ENCODE measurements at regions of chr12 and their contacts with region 1.

Region 1: DNA sequence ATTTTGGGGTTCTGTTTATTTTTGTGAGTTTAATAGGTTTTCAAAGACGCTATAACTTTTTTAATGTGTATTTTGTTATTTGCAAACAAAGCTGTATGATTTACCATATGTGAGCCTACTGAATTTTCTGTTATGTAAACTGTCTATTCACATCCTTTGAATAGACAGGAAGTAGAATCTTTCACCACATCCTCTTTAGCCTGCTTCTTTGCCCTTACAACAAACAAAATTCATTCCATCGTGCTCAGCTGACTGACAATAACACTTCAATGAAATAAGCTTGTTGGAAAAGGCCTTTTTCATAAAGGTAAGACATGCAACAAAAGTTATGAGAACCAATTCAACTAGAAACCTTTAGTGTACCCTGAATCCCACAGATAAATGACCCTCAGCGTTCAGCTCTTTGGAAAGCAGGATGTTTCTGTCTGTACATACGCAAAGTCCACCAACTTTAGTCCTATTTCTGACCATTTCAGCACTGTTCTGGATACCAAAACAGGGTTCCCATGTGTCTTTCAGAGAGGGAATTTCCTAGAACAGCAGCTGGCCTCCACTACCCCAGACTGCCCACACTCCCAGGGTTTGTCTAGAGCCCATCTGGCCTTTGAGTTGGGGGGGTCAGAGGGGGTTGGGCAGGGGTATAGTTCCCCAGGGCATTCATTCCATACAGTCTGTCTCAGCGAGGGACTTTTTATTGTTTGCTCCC is 71.3 kb downstream of the DUSP6 start:
- DNase-seq: peak in 4 of 14 experiments; percentile 1 to 76 (median 46)
- ATAC-seq: peak; percentile 96
- H3K4me3 ChIP-seq: no peak overlapping the region
- H3K4me3 Mint-ChIP-seq: peak overlapping the region; percentile 50
- H3K27ac ChIP-seq: no peak overlapping the region
- H3K27ac Mint-ChIP-seq: peak overlapping the region; percentile 84
- H3K4me1 ChIP-seq: peaks cover 10% of the 10 kb centered on the region
- H3K4me1 Mint-ChIP-seq: peaks cover 48% of the 10 kb centered on the region
- H3K27me3 ChIP-seq: no peaks in the 10 kb centered on the region
- H3K27me3 Mint-ChIP-seq: no peaks in the 10 kb centered on the region
- CTCF ChIP-seq: no peak

Region 2: DNA sequence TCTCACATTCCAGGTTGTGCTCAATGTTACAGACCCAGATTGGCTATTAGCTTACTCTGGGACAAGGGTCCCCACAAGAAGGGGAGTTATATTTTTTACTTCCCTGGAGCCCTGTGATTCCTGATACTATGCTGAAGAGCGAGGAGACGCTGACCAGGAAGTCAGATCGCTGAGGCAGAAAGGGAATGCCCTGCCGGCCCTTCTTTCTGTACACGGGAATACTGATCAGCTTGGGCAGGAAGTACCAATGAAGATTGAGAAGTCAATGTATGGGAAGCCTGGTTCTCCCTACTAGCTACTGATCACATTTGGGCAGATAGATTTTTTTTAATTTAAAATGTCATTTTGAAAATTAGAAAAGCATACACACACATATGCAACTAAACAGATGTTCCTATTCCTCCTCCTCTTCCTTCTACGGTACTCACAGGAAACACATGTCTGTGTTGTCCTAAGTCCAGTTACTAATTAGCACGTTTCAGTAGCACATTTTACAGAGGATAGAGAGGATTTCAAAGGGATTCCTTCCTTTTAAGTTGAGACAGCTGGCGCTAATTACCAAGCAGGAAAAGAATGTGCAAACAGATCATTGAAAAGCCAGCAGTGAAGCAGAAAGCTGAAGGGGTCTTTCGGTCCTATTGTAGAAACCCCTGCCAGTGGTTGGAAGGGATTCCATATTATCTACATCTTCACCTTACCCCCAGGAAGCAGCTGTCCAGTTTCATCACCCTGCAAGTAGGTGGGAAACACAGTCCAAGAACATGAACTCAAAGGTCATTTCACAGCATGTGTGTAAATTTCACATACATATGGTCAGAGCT is 221.1 kb before region 1 on chr12:
- CTCF ChIA-PET with region 1: no interaction called
- POLR2A ChIA-PET with region 1: no interaction called
- intact Hi-C with region 1: no loop called
- DNase-seq: no peak
- ATAC-seq: no peak
- H3K4me3 ChIP-seq: no peak overlapping the region
- H3K4me3 Mint-ChIP-seq: no peak overlapping the region
- H3K27ac ChIP-seq: no peak overlapping the region
- H3K27ac Mint-ChIP-seq: no peak overlapping the region
- H3K4me1 ChIP-seq: no peaks in the 10 kb centered on the region
- H3K4me1 Mint-ChIP-seq: no peaks in the 10 kb centered on the region
- H3K27me3 ChIP-seq: no peaks in the 10 kb centered on the region
- H3K27me3 Mint-ChIP-seq: no peaks in the 10 kb centered on the region
- CTCF ChIP-seq: no peak

Region 3: DNA sequence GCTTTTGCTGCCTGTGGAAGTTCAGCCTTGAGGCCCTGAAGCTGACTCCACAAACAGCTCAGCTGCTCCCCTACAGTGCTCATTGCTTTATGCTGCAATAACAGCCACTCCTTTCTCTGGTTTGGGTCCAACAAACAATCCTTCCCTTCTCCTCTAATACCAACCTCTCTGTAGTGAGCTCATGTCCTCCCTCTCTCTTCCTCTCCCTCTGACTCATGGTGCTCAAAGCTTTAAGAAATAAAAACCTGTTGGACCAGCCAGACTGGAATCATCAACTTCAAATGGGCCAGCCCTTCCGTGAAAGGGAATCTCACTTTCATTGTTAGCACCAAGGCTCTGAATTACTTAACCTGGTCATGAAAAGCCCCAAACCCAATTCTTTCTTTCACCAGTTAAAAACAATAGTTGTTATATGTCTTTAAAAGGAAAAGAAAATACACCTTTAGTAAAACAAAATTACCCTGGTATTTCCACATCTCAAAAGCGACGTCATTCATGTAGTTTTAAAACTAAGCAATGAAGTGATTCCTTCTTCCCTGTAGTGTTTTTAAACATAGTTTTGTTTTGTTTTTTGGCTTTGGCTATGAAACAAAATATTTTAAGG is 55.1 kb before region 1 on chr12:
- CTCF ChIA-PET with region 1: no interaction called
- POLR2A ChIA-PET with region 1: interaction called, 3 read pairs
- intact Hi-C with region 1: loop called in 1 of 2 experiments (anchors 2 kb)
- DNase-seq: peak in 2 of 14 experiments; percentile 24 to 33
- ATAC-seq: peak; percentile 31
- H3K4me3 ChIP-seq: no peak overlapping the region
- H3K4me3 Mint-ChIP-seq: no peak overlapping the region
- H3K27ac ChIP-seq: peak overlapping the region in 1 of 2 donors; percentile 10
- H3K27ac Mint-ChIP-seq: peak overlapping the region; percentile 54
- H3K4me1 ChIP-seq: peaks cover 24% of the 10 kb centered on the region
- H3K4me1 Mint-ChIP-seq: peaks cover 39% of the 10 kb centered on the region
- H3K27me3 ChIP-seq: no peaks in the 10 kb centered on the region
- H3K27me3 Mint-ChIP-seq: no peaks in the 10 kb centered on the region
- CTCF ChIP-seq: no peak

Region 4: GRCh38 chr12:89345830-89346740 is 65.1 kb after region 1 on chr12:
- CTCF ChIA-PET with region 1: no interaction called
- POLR2A ChIA-PET with region 1: interaction called, 38 read pairs
- intact Hi-C with region 1: no loop called
- DNase-seq: peak in 4 of 14 experiments; percentile 27 to 80 (median 73)
- ATAC-seq: peak; percentile 57
- H3K4me3 ChIP-seq: peak overlapping the region; percentile 28
- H3K4me3 Mint-ChIP-seq: peak overlapping the region; percentile 71
- H3K27ac ChIP-seq: no peak overlapping the region
- H3K27ac Mint-ChIP-seq: no peak overlapping the region
- H3K4me1 ChIP-seq: peaks cover 31% of the 10 kb centered on the region
- H3K4me1 Mint-ChIP-seq: peaks cover 47% of the 10 kb centered on the region
- H3K27me3 ChIP-seq: no peaks in the 10 kb centered on the region
- H3K27me3 Mint-ChIP-seq: no peaks in the 10 kb centered on the region
- CTCF ChIP-seq: no peak

Region 5: DNA sequence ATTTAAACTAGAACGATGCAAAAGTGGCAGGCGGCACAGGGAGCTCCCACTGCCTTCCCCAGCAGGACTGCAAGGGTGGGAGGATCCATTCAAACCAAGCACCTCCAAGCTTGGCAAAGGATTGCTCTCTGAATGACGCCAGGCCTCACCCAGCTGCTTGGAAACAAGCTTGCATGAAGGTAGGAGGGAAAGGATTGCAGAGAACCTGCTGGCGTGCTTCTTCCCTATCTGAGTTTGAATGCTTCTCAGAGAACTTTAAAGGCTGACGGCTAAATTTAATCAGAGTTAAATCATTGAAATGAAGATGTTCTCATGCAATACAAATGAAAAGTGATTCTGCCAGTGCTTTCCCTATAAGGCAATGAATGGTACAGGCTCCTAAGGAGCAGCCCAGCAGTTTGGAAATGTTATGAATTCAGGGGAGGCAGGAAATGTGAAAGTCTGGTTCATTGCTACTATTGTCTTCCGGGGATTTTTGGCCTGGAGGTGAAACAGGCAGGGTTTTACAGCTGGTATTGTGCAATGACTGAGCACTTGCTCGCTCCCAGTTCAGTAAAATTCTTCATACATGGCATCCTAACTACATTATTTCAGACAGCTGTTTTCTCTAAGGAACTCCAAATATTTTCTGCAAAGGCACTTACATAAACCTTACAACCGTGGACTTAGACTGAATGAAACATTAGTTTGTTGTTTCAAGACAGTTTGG is 103.2 kb after region 1 on chr12:
- CTCF ChIA-PET with region 1: no interaction called
- POLR2A ChIA-PET with region 1: no interaction called
- intact Hi-C with region 1: no loop called
- DNase-seq: peak in 2 of 14 experiments; percentile 16 to 21
- ATAC-seq: no peak
- H3K4me3 ChIP-seq: no peak overlapping the region
- H3K4me3 Mint-ChIP-seq: no peak overlapping the region
- H3K27ac ChIP-seq: no peak overlapping the region
- H3K27ac Mint-ChIP-seq: no peak overlapping the region
- H3K4me1 ChIP-seq: no peaks in the 10 kb centered on the region
- H3K4me1 Mint-ChIP-seq: peaks cover 6% of the 10 kb centered on the region
- H3K27me3 ChIP-seq: no peaks in the 10 kb centered on the region
- H3K27me3 Mint-ChIP-seq: no peaks in the 10 kb centered on the region
- CTCF ChIP-seq: no peak

Measured in CD4-positive, alpha-beta T cell (primary cell).